Adrenal gland (tissue), 19 donors: ENCODE measurements at regions of chr13 and their contacts with region 1.

Region 1: GRCh38 chr13:36395280-36395679 is 37.0 kb upstream of the CCNA1 start:
- DNase-seq: no peak
- H3K4me3 ChIP-seq: no peak overlapping the region
- H3K27ac ChIP-seq: no peak overlapping the region
- H3K4me1 ChIP-seq: no peaks in the 10 kb centered on the region
- H3K27me3 ChIP-seq: peaks cover 4% of the 10 kb centered on the region
- CTCF ChIP-seq: peak; percentile 39 to 73 (median 59)
- POLR2A ChIP-seq: no peak

Region 2: DNA sequence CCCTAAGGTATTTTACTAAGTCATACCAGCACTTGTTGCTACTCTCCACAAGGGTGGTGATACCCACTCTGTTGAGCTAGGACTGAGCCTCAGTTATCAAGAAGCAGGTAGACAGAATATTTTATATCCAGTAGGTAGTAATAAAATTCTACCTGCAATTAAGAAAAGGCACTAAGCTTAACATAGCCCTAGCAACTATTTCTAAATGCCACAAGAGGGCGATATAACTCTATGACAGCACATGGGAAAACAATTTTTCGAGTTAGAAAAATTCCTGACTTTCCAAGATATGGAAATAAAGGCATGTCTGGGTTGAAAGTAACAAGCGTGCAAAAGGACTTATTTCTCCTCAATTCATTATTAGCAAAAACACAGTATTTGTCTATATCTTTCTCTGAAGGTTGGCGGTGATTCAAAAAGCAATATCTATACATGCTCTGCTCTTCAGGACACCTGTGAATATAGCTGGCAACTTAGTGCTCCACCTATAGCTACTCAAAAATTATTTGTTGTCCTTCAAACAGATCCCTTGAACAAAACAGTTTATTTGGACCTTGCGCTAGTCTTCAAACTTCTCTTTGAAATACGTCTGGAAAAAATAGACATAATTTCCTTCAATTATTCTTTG is 112.3 kb before region 1 on chr13:
- intact Hi-C with region 1: loop called (anchors 5 to 10 kb)
- DNase-seq: no peak
- H3K4me3 ChIP-seq: no peak overlapping the region
- H3K27ac ChIP-seq: no peak overlapping the region
- H3K4me1 ChIP-seq: no peaks in the 10 kb centered on the region
- H3K27me3 ChIP-seq: no peaks in the 10 kb centered on the region
- CTCF ChIP-seq: peak; percentile 70 to 88 (median 85)
- POLR2A ChIP-seq: no peak

Region 3: GRCh38 chr13:36346222-36347083 is 48.8 kb before region 1 on chr13 and contains the start of gene SPART:
- intact Hi-C with region 1: loop called in 1 of 2 experiments (anchors 5 kb)
- DNase-seq: peak; percentile 93 to 98 (median 94)
- H3K4me3 ChIP-seq: peak within 1 kb of the TSS; percentile 68 to 96 (median 88)
- H3K27ac ChIP-seq: peak within 1 kb of the TSS; percentile 97 to 100 (median 99)
- H3K4me1 ChIP-seq: peaks cover 10 to 45% of the 10 kb centered on the region in 2 donors
- H3K27me3 ChIP-seq: no peaks in the 10 kb centered on the region
- CTCF ChIP-seq: peak; percentile 95 to 98 (median 98)
- POLR2A ChIP-seq: peak; percentile 54 to 87
- total RNA-seq, gene SPART: 56.0 to 208 (median 92.1) TPM

Region 4: DNA sequence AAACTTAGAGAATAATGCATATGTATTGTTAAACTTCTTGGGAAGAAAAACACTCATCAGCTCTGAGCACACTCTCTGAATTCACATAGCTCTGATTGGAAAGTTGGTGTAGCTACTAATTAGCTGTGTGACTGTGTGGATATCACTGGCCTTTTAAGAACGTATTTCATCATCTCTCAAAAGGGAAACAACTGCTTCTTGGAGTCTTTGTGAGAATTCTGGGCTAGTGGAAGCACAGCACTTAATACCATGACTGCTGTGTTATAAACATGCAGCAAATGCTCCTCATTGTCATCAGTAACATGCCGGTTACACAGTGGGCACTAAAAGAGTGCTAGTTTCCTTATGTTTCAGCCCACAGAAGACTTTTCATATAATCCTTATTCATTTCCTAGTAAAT is 931.1 kb after region 1 on chr13:
- intact Hi-C with region 1: no loop called
- DNase-seq: no peak
- H3K4me3 ChIP-seq: no peak overlapping the region
- H3K27ac ChIP-seq: no peak overlapping the region
- H3K4me1 ChIP-seq: no peaks in the 10 kb centered on the region
- H3K27me3 ChIP-seq: no peaks in the 10 kb centered on the region
- CTCF ChIP-seq: no peak
- POLR2A ChIP-seq: no peak